GM12878 (cell line): ENCODE measurements at regions of chr3 and their contacts with region 1.

Region 1: GRCh38 chr3:27712136-27713077 is 9.7 kb downstream of the EOMES start:
- DNase-seq: no peak
- ATAC-seq: peak; percentile 86
- H3K4me3 ChIP-seq: peak overlapping the region; percentile 71
- H3K27ac ChIP-seq: no peak overlapping the region
- H3K4me1 ChIP-seq: no peaks in the 10 kb centered on the region
- H3K27me3 ChIP-seq: peaks cover 2 to 24% of the 10 kb centered on the region in 2 experiments
- CTCF ChIP-seq: peak; percentile 69 to 88 (median 84)
- EP300 ChIP-seq: no peak; a peak in 1 of 4 replicates
- POLR2A ChIP-seq: no peak
- RAD21 ChIP-seq: peak; percentile 87

Region 2: DNA sequence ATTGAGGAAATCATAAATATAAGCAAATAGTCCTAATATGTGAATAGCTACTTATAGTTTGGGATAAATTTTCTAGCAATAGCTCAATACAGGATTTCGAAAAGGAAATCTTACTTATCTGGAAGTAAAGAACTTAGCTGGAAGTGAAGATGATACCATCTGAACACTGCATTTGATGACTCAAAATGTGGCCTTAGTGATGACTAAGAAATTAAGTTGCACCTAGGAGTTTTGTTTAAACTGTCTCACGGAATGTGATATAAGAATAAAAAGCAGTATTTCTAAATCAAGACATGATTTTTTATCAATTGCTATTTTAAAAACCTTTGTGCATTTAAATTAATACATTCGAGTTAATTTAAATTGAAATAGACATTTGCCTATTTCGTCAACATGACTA is 81.5 kb before region 1 on chr3:
- CTCF ChIA-PET with region 1: no interaction called
- POLR2A ChIA-PET with region 1: interaction called, 10 read pairs
- RAD21 ChIA-PET with region 1: no interaction called
- SMC1A ChIA-PET with region 1: no interaction called
- in situ Hi-C with region 1: no loop called
- intact Hi-C with region 1: no loop called
- DNase-seq: no peak
- ATAC-seq: peak; percentile 71
- H3K4me3 ChIP-seq: no peak overlapping the region
- H3K27ac ChIP-seq: no peak overlapping the region
- H3K4me1 ChIP-seq: no peaks in the 10 kb centered on the region
- H3K27me3 ChIP-seq: no peaks in the 10 kb centered on the region
- CTCF ChIP-seq: no peak
- EP300 ChIP-seq: no peak
- POLR2A ChIP-seq: no peak
- RAD21 ChIP-seq: no peak

Region 3: GRCh38 chr3:27728195-27729087 is 16.0 kb after region 1 on chr3:
- CTCF ChIA-PET with region 1: interaction called, 41 read pairs
- POLR2A ChIA-PET with region 1: interaction called, 26 read pairs
- RAD21 ChIA-PET with region 1: interaction called, 47 read pairs
- SMC1A ChIA-PET with region 1: interaction called, 29 read pairs
- in situ Hi-C with region 1: no loop called
- intact Hi-C with region 1: no loop called
- DNase-seq: no peak
- ATAC-seq: peak; percentile 63
- H3K4me3 ChIP-seq: no peak overlapping the region
- H3K27ac ChIP-seq: no peak overlapping the region
- H3K4me1 ChIP-seq: no peaks in the 10 kb centered on the region
- H3K27me3 ChIP-seq: peaks cover 8 to 26% of the 10 kb centered on the region in 2 experiments
- CTCF ChIP-seq: peak in 1 of 3 experiments; percentile 16; a peak in 2 of 6 replicates
- EP300 ChIP-seq: no peak
- POLR2A ChIP-seq: no peak
- RAD21 ChIP-seq: no peak

Region 4: DNA sequence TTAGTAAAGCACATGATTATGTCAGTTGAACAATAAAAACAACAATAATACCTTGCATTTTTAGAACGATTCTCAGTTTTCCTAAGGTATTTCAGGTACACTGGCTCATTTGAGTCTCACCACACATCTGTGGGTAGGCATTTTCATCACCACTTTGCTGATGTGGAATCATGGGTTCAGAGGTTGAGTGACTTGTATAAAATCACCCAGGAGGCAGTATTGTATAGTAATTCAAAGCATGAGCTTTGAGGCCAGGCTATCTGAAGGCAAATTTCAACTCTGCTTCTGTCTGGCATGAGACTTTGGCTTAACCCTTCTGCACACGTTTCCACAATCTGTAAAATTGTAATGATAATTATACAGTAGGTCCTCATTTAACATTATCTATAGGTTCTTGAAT is 345.1 kb after region 1 on chr3:
- CTCF ChIA-PET with region 1: interaction called, 4 read pairs
- POLR2A ChIA-PET with region 1: no interaction called
- RAD21 ChIA-PET with region 1: interaction called, 13 read pairs
- SMC1A ChIA-PET with region 1: interaction called, 3 read pairs
- in situ Hi-C with region 1: no loop called
- intact Hi-C with region 1: no loop called
- DNase-seq: no peak
- ATAC-seq: peak; percentile 41; the same call in 2 of the 3 replicates
- H3K4me3 ChIP-seq: no peak overlapping the region
- H3K27ac ChIP-seq: no peak overlapping the region
- H3K4me1 ChIP-seq: no peaks in the 10 kb centered on the region
- H3K27me3 ChIP-seq: no peaks in the 10 kb centered on the region
- CTCF ChIP-seq: no peak
- EP300 ChIP-seq: no peak
- POLR2A ChIP-seq: no peak
- RAD21 ChIP-seq: 0 out of 2 replicates have a peak, but pooled peaks have one; percentile 13

Region 5: DNA sequence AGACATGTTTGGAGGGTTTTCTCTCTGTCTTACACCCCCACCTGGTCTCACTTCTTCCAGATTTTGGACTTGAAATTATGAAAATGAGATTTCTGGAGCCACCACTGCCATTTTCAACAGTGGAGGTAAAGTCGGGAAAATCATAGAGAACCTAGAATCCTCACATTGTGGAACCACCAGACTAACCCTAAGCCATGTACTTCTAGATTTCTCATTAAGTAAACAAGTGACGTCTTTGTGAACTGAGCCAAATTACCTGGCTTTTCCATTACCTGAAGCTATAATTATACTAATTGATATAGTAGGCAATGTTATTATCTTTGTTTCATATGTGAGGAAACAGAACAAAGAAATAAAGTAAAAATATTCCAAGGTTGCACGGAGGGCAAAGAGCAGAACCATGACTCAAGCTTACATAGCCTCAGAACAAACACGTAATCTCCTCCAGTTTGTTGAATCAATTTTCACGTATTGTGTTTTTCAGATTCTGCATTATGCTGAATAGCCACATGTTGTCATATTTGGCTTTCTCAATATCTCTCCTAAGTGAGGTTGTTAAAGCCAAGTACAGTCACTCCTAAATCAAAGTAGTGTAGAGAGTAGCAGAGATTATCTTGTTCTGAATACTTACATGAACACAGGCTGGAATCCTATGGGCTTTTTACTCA is 427.7 kb after region 1 on chr3:
- CTCF ChIA-PET with region 1: interaction called, 3 read pairs
- POLR2A ChIA-PET with region 1: interaction called, 3 read pairs
- RAD21 ChIA-PET with region 1: interaction called, 10 read pairs
- SMC1A ChIA-PET with region 1: interaction called, 12 read pairs
- in situ Hi-C with region 1: loop called (anchors 10 kb)
- intact Hi-C with region 1: no loop called
- DNase-seq: no peak
- ATAC-seq: peak; percentile 6
- H3K4me3 ChIP-seq: no peak overlapping the region
- H3K27ac ChIP-seq: no peak overlapping the region
- H3K4me1 ChIP-seq: no peaks in the 10 kb centered on the region
- H3K27me3 ChIP-seq: no peaks in the 10 kb centered on the region
- CTCF ChIP-seq: no peak
- EP300 ChIP-seq: no peak
- POLR2A ChIP-seq: no peak
- RAD21 ChIP-seq: no peak

Region 6: GRCh38 chr3:28317438-28318022 is 605.1 kb after region 1 on chr3:
- CTCF ChIA-PET with region 1: interaction called, 14 read pairs
- POLR2A ChIA-PET with region 1: interaction called, 3 read pairs
- RAD21 ChIA-PET with region 1: interaction called, 21 read pairs
- SMC1A ChIA-PET with region 1: interaction called, 19 read pairs
- in situ Hi-C with region 1: no loop called
- intact Hi-C with region 1: no loop called
- DNase-seq: no peak
- ATAC-seq: peak; percentile 96
- H3K4me3 ChIP-seq: no peak overlapping the region
- H3K27ac ChIP-seq: no peak overlapping the region
- H3K4me1 ChIP-seq: no peaks in the 10 kb centered on the region
- H3K27me3 ChIP-seq: no peaks in the 10 kb centered on the region
- CTCF ChIP-seq: peak; percentile 58 to 61 (median 59); a peak in 5 of 6 replicates
- EP300 ChIP-seq: no peak
- POLR2A ChIP-seq: no peak
- RAD21 ChIP-seq: peak; percentile 43; the same call in 1 of the 2 replicates

Region 7: DNA sequence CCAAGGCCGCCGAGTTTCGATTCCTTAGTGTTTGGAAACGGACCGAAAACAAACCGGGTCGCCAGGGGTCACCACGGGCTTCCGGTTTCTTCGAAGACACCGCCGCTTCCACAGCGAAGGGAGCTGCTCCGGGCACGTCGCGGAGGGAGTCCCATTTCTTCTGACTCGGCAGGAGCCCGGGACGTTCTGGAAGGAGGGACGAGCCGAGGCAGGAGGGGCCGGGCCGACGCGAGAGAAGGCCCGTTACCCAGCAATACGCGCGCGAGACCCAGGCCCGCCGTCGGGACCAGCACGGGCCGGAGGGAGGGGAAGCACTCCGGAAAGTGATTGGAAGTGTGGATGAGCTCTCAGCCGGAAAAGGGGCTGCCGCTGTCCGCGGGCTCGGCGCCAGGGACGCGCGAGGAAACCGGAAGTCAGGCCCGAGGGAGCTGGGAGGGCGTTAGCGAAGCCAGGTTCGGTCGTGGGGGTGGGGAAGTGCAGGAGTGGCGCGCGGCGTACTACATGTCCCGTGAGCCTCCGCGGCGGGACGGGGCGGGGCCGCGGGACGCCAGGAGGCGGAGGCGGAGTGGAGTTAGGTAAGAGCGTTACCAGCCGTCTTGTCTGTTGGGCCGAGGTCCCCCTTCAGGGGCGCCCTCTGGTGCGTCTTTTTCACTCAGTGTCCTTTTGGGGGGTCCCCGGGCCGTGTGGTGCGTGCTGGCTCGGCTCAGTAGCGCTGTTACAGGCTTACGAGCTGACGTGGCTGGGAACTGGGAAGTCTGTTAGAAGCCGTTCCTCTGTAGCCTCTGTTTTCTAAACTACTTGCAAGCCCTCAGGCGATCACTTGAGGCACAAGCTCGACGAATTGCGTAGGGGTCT is 636.4 kb after region 1 on chr3 and contains the starts of genes AZI2 and ZCWPW2:
- CTCF ChIA-PET with region 1: interaction called, 15 read pairs
- POLR2A ChIA-PET with region 1: interaction called, 17 read pairs
- RAD21 ChIA-PET with region 1: interaction called, 21 read pairs
- SMC1A ChIA-PET with region 1: interaction called, 7 read pairs
- in situ Hi-C with region 1: no loop called
- intact Hi-C with region 1: no loop called
- DNase-seq: peak; percentile 74
- ATAC-seq: peak; percentile 92
- H3K4me3 ChIP-seq: peak within 1 kb of the TSS; percentile 81
- H3K27ac ChIP-seq: peak within 1 kb of the TSS; percentile 97
- H3K4me1 ChIP-seq: no peaks in the 10 kb centered on the region
- H3K27me3 ChIP-seq: no peaks in the 10 kb centered on the region
- CTCF ChIP-seq: peak; percentile 20 to 43 (median 23); a peak in 4 of 6 replicates
- EP300 ChIP-seq: peak in 1 of 2 experiments; percentile 53; a peak in 1 of 4 replicates
- POLR2A ChIP-seq: peak; percentile 88
- RAD21 ChIP-seq: no peak
- polyA plus RNA-seq, gene AZI2: 33.4 to 36.2 TPM
- polyA plus RNA-seq, gene ZCWPW2: 0.31 to 0.37 TPM